IMR-90 (cell line): ENCODE measurements at regions of chr3 and their contacts with region 1.

Region 1: DNA sequence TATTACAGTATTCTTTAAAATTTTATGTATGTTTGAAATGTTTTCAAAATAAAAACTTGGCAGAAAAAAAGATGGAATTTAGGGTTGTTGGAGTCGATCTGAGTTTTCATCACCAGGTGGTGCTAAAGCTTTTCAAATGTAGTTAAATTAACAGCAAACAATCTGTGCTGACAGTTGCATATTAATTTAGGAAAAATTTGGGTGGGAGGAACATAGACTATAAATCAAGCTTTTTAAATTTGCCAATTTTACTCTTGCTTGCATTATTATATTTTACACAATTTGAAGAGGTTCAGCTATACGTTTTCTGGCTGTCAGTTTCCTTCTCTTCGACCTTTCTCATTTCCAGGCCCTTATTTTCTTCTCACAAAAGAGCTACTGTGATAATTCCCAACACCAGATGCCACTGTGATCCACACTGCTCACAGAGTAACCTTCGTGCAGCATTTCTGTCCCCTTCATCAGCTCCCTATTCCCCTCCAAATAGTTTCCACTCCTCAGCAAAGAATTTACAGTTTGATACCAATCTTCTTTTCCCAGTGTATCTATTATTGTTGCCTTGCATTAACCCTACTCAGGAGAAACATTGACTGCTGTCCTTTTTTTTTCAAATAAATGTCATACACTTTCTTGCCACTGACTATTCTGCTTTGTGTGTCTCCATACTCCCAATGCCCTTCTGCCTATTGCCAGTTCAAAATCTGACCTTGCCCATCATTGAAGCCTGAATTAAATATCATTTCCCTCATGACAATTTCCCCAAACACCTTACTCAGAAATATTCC is 53.4 kb upstream of the EIF5A2 start:
- DNase-seq: peak; percentile 54
- ATAC-seq: peak; percentile 75
- H3K4me3 ChIP-seq: no peak overlapping the region
- H3K27ac ChIP-seq: no peak overlapping the region
- H3K4me1 ChIP-seq: peaks cover 4% of the 10 kb centered on the region; the same call in 1 of the 2 replicates
- H3K27me3 ChIP-seq: no peaks in the 10 kb centered on the region
- CTCF ChIP-seq: peak; percentile 71
- POLR2A ChIP-seq: no peak
- RAD21 ChIP-seq: peak; percentile 78

Region 2: DNA sequence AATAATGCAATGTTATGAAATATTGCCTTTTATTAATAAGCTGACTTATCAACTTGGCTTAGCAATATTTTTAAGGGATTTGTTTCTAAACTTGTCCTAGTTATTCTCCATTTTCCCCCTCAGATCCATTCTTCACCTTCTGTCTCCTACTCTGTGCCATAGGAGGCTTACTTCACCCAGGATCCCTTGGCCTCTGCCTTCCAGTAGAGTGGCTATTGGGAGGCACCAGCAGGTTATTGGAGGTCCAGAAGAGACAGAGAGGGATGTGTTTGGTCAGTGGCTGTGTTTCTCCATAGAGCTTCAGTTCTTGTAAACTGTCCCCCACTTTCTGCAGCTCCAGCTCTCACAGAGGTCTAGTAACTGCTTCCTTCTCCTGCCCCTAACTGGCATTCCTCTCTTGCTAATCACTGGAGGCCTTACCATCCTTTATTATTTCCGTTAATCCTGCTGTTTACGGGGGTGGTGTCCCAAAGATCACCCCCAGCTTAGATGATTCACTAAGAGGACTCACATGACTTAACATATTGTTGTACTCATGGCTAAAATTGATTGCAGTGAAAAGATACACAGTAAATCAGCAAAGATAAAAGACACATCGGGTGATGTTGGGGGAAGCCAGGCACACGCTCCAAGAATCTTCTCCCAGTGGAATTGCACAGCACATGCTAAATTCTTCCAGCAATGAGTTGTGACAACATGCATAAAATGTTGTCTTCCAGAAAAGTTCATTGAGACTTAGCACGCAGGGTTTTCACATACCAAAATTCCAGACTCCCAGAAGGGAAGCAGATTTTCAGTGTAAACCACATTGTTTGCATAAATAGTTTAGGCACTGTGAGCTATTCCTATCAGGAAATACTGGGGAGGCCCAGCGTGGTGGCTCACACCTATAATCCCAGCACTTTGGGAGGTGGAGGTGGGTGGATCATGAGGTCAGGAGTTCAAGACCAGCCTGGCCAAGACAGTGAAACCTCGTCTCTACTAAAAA is 159.3 kb before region 1 on chr3:
- CTCF ChIA-PET with region 1: no interaction called
- POLR2A ChIA-PET with region 1: no interaction called
- dilution Hi-C with region 1: no loop called
- in situ Hi-C with region 1: no loop called
- intact Hi-C with region 1: no loop called
- DNase-seq: peak; percentile 99
- ATAC-seq: peak; percentile 88
- H3K4me3 ChIP-seq: no peak overlapping the region
- H3K27ac ChIP-seq: peak overlapping the region; percentile 97
- H3K4me1 ChIP-seq: peaks cover 20% of the 10 kb centered on the region
- H3K27me3 ChIP-seq: no peaks in the 10 kb centered on the region
- CTCF ChIP-seq: no peak
- POLR2A ChIP-seq: no peak
- RAD21 ChIP-seq: peak; percentile 20

Region 3: DNA sequence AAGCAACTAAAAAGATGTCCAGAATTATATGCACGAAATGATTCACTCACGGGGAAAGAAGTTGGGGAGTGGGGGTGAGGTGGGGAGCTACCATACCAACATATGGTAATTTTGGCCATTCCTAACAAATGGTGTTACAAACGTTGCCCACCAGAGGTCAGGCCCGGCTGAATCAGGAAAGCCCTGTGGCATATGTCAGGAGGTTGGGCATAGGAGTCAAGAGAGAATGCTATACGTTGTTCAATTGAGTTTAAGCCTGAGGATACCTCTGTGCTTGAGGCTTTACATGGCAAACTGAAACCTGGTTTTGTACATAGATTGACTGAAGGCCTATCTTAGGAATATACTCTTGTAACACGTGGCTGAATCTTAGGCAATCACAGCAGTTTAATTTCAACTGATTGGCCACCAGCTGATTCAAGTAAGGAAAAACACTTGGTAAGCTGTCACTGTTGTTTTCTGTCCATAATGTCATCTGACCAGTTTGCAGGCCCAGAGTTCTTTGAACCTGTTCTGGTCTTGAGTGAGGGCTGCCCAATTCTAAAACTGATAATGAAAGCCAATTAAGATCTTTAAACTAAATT is 88.1 kb after region 1 on chr3:
- CTCF ChIA-PET with region 1: interaction called, 3 read pairs
- POLR2A ChIA-PET with region 1: no interaction called
- dilution Hi-C with region 1: no loop called
- in situ Hi-C with region 1: loop called (anchors 5 kb)
- intact Hi-C with region 1: loop called (anchors 2 kb)
- DNase-seq: peak; percentile 61
- ATAC-seq: peak; percentile 91
- H3K4me3 ChIP-seq: no peak overlapping the region
- H3K27ac ChIP-seq: no peak overlapping the region
- H3K4me1 ChIP-seq: peaks cover 4% of the 10 kb centered on the region; the same call in 1 of the 2 replicates
- H3K27me3 ChIP-seq: no peaks in the 10 kb centered on the region
- CTCF ChIP-seq: peak; percentile 76
- POLR2A ChIP-seq: no peak
- RAD21 ChIP-seq: peak; percentile 84

Region 4: GRCh38 chr3:171168086-171168485 is 206.3 kb after region 1 on chr3:
- CTCF ChIA-PET with region 1: interaction called, 4 read pairs
- POLR2A ChIA-PET with region 1: no interaction called
- dilution Hi-C with region 1: no loop called
- in situ Hi-C with region 1: no loop called
- intact Hi-C with region 1: loop called (anchors 1 kb)
- DNase-seq: peak; percentile 22
- ATAC-seq: no peak; the same call in 1 of the 2 replicates
- H3K4me3 ChIP-seq: no peak overlapping the region
- H3K27ac ChIP-seq: no peak overlapping the region
- H3K4me1 ChIP-seq: peaks cover 2% of the 10 kb centered on the region; the same call in 1 of the 2 replicates
- H3K27me3 ChIP-seq: no peaks in the 10 kb centered on the region
- CTCF ChIP-seq: peak; percentile 33; the same call in 1 of the 2 replicates
- POLR2A ChIP-seq: no peak
- RAD21 ChIP-seq: peak; percentile 27; the same call in 1 of the 2 replicates

Region 5: GRCh38 chr3:171187706-171188290 is 226.0 kb after region 1 on chr3:
- CTCF ChIA-PET with region 1: interaction called, 7 read pairs
- POLR2A ChIA-PET with region 1: no interaction called
- dilution Hi-C with region 1: no loop called
- in situ Hi-C with region 1: loop called (anchors 10 kb)
- intact Hi-C with region 1: loop called (anchors 1 kb)
- DNase-seq: peak; percentile 48
- ATAC-seq: peak; percentile 73
- H3K4me3 ChIP-seq: no peak overlapping the region
- H3K27ac ChIP-seq: no peak overlapping the region
- H3K4me1 ChIP-seq: 0 out of 2 replicates have a peak, but pooled peaks cover 1% of the 10 kb centered on the region
- H3K27me3 ChIP-seq: no peaks in the 10 kb centered on the region
- CTCF ChIP-seq: peak; percentile 60
- POLR2A ChIP-seq: no peak
- RAD21 ChIP-seq: peak; percentile 76

Region 6: DNA sequence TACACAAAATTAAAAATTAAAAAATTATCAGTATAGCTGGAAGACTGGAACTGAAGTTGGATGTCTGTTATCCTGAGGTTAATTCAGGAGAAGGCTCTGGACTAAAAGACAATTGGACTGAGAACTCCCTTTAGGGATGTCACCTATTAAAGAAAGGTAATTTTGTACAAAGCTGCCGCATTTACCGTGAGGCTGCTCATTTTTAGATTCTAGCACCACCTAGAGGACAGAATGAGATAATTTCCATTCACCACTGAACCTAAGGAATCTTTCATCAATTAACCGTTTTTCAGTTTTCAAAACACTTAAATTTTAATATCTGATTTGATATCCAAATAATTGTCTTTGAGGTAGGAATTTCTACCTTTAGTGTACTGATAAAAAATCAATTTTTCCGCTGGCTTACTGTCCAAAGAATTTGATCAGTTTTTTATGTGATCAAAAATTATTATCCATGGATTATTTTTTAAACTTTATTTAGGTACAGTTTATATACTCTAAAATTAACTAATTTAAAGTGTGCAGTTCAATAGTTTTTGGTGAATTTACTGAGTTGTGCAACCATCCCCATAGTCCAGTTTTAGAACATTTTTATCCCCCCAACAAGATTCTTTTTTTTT is 605.1 kb after region 1 on chr3:
- CTCF ChIA-PET with region 1: interaction called, 11 read pairs
- POLR2A ChIA-PET with region 1: no interaction called
- dilution Hi-C with region 1: no loop called
- in situ Hi-C with region 1: loop called (anchors 5 kb)
- intact Hi-C with region 1: loop called (anchors 1 kb)
- DNase-seq: peak; percentile 46
- ATAC-seq: peak; percentile 68; the same call in 1 of the 2 replicates
- H3K4me3 ChIP-seq: no peak overlapping the region
- H3K27ac ChIP-seq: no peak overlapping the region
- H3K4me1 ChIP-seq: peaks cover 3% of the 10 kb centered on the region
- H3K27me3 ChIP-seq: peaks cover 3% of the 10 kb centered on the region; the same call in 1 of the 2 replicates
- CTCF ChIP-seq: peak; percentile 83
- POLR2A ChIP-seq: no peak
- RAD21 ChIP-seq: peak; percentile 90

Region 7: DNA sequence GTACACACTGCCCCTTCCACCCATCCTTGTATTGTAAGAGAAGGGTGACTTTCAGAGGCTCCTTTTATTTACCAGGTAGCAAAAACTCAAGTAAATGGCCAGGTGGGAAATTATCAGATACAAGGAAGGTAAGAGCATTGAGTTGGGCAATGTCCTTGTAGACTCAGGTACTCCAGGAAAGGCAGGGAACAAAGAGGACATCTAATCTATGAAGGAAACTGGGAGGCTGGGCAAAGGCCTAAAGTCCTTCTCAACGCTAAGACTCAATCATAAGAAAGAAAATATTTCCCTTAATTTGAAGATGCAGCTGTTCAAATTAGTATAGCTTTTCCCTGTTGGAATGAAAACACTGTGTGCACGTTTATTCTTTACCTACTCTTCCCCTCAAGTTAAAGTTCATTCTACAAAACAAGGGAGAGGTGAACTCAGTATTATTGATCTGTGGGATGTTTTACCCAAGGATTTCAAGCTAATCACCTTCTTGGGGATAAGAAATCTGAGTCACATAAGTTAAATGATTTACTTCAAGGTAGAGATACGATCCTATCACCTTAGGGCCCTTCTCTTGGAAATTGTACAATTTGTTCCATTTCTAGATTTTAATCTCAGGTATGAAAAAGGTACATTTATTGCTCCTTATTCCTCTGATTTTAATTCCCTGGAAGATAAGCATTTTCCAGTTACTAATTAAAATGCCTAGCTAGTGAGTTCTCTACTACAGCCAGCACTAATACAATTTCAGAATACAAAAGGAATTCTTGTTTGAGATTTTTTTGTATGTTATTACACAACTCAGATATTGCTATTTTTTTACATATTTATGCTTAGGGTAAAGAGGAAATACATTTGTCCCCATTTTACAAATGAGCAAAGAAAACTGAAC is 767.9 kb after region 1 on chr3:
- CTCF ChIA-PET with region 1: no interaction called
- POLR2A ChIA-PET with region 1: no interaction called
- dilution Hi-C with region 1: no loop called
- in situ Hi-C with region 1: no loop called
- intact Hi-C with region 1: no loop called
- DNase-seq: no peak
- ATAC-seq: no peak
- H3K4me3 ChIP-seq: no peak overlapping the region
- H3K27ac ChIP-seq: no peak overlapping the region
- H3K4me1 ChIP-seq: no peaks in the 10 kb centered on the region; the same call in 1 of the 2 replicates
- H3K27me3 ChIP-seq: no peaks in the 10 kb centered on the region
- CTCF ChIP-seq: no peak
- POLR2A ChIP-seq: no peak
- RAD21 ChIP-seq: no peak